AG04449 (cell line): ENCODE measurements at regions of chr3 and their contacts with region 1.

Region 1: GRCh38 chr3:8851719-8852118 is 82.3 kb upstream of the OXTR start:
- DNase-seq: no peak
- H3K4me3 ChIP-seq: no peak overlapping the region
- CTCF ChIP-seq: no peak

Region 2: GRCh38 chr3:8678751-8679150 is 173.0 kb before region 1 on chr3:
- CTCF ChIA-PET with region 1: no interaction called
- POLR2A ChIA-PET with region 1: no interaction called
- DNase-seq: no peak
- H3K4me3 ChIP-seq: peak overlapping the region; percentile 27
- CTCF ChIP-seq: no peak

Region 3: GRCh38 chr3:8840556-8840955 is 11.2 kb before region 1 on chr3:
- CTCF ChIA-PET with region 1: interaction called, 15 read pairs
- POLR2A ChIA-PET with region 1: interaction called, 5 read pairs
- DNase-seq: peak; percentile 78
- H3K4me3 ChIP-seq: no peak overlapping the region
- CTCF ChIP-seq: no peak

Region 4: DNA sequence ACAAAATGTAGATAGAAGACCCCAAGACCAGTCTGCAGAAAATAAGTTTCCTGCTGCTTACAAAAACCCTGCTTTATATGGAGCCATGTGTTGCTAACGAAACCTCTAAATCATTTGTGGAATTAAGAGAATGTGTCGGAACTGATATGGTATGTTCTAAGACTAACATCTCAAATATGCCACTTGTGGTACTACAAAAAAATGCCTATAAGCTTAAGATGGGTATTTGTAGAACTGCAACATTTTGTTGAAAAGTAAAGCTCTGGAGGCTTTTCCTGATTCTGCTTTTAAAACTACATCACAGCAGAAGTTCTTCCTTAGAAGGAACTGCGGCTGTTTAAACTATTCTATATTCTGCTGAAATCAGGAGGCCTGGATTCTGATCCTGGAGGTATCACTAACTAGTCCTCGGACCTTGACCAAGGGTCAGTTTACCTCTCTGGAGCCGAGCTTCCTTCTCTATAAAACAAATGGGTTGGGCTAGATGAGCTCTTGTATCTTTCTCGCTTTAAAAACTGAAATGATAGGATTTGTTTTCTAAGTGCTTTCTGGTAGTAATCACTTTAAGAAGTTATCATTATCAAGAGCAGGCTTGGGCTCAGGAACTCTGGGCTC is 36.7 kb after region 1 on chr3:
- CTCF ChIA-PET with region 1: interaction called, 4 read pairs
- POLR2A ChIA-PET with region 1: interaction called, 25 read pairs
- DNase-seq: peak; percentile 91
- H3K4me3 ChIP-seq: no peak overlapping the region
- CTCF ChIP-seq: no peak

Region 5: GRCh38 chr3:9550999-9551398 is 699.3 kb after region 1 on chr3:
- CTCF ChIA-PET with region 1: no interaction called
- POLR2A ChIA-PET with region 1: no interaction called
- DNase-seq: no peak
- H3K4me3 ChIP-seq: no peak overlapping the region
- CTCF ChIP-seq: no peak